ENCODE measurements at regions of chr11 and their contacts with region 1.

Region 1: GRCh38 chr11:76670485-76671236 is at the start of gene LRRC32:
- DNase-seq: peak in 1 of 2 donors; percentile 79
- H3K4me3 ChIP-seq: peak within 1 kb of the TSS; percentile 86 to 95
- H3K27ac ChIP-seq: peak within 1 kb of the TSS; percentile 83 to 91
- H3K4me1 ChIP-seq: peaks cover 18 to 33% of the 10 kb centered on the region in 2 donors
- H3K27me3 ChIP-seq: no peaks in the 10 kb centered on the region
- CTCF ChIP-seq: peak in 1 of 3 experiments; percentile 15
- total RNA-seq, gene LRRC32: 280 TPM

Region 2: DNA sequence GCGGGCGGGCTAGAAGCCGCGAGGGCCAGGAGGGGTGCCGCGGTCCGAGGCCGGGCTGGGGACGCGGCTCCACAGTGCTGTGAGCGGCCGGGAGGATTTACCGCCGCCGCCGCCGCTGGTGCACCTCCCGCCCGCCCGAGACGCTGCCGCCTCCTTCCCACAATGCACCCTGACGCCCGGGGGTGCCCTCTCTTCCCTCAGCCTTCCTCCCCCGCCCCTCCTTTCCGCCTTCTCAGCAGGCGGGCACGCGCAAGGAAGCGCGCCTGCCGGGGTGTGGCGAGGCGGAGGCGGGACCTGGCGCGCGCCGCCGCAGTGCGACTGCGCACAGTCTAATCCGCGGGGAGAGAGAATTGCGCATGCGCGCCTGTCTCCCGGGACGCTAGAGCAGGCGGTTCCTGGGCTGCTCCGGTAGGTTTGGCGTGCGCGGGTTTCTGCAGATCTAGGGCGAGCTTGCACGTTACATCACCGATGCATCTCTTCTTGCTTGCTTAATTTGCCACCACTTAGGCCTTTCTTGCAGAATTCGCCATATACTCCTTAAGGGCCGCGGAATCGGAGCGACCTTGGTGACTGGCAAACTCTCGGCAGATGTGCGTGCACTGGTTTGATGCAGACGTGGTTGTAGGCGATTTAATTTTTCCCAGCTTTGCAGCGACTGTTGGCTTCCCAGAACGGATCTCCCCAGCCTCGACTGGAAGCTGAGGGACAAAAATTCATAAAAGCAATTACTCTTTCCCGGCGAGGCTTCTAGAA is 289.5 kb before region 1 on chr11 and contains the starts of genes GVQW3 and THAP12:
- intact Hi-C with region 1: loop called (anchors 5 kb)
- DNase-seq: peak; percentile 88 to 99
- H3K4me3 ChIP-seq: peak within 1 kb of the TSS; percentile 89 to 98
- H3K27ac ChIP-seq: peak within 1 kb of the TSS; percentile 73 to 84
- H3K4me1 ChIP-seq: peaks cover 0 to 21% of the 10 kb centered on the region in 2 donors
- H3K27me3 ChIP-seq: no peaks in the 10 kb centered on the region
- CTCF ChIP-seq: peak in 2 of 3 experiments; percentile 19 to 26
- total RNA-seq, gene GVQW3: not detected
- total RNA-seq, gene THAP12: 12.7 TPM

Region 3: GRCh38 chr11:76444384-76445123 is 226.1 kb before region 1 on chr11 and contains the start of gene EMSY:
- intact Hi-C with region 1: loop called (anchors 5 kb)
- DNase-seq: peak; percentile 89 to 99
- H3K4me3 ChIP-seq: peak within 1 kb of the TSS; percentile 87 to 90
- H3K27ac ChIP-seq: peak within 1 kb of the TSS; percentile 90 to 93
- H3K4me1 ChIP-seq: peaks cover 8 to 15% of the 10 kb centered on the region in 2 donors
- H3K27me3 ChIP-seq: no peaks in the 10 kb centered on the region
- CTCF ChIP-seq: no peak
- total RNA-seq, gene EMSY: 7.5 TPM

Region 4: DNA sequence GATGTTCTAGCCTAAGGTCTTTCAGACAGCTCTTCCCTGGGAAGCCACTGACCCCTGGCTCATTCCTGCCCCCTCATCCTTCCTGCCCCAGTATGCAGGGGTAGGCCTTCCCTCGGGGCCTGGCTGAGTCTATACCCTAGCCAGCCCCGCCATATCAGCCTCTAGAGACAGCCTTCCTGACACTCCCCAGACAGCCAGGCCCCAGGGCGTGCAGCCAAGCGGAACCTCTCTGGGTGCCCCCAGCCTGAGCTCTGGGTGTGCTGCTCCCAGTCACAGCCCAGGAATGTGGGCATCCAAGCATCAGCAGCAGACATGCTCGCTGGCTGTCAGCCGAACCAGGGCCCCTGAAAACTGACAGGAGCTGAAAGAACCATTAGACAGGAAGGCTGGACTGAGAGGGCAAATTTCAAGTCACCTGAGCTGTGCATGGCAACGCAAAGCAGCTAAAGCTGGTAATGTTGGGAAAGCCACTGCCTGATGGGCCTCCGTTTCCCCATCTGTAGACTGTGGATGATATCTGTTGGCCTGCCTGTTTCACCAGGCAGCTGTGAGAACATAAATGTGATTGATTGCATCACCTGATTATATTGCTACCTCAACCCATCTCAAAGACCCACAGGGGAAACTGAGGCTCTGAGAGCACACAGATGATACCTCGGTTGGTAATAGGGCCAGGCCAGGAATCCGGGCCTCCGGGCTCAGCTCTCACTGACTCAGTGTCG is 93.3 kb before region 1 on chr11:
- intact Hi-C with region 1: loop called (anchors 1 kb)
- DNase-seq: peak in 1 of 2 donors; percentile 79
- H3K4me3 ChIP-seq: no peak overlapping the region
- H3K27ac ChIP-seq: peak overlapping the region; percentile 82 to 85
- H3K4me1 ChIP-seq: peaks cover 11 to 31% of the 10 kb centered on the region in 2 donors
- H3K27me3 ChIP-seq: no peaks in the 10 kb centered on the region
- CTCF ChIP-seq: no peak

Region 5: GRCh38 chr11:76610871-76611475 is 59.7 kb before region 1 on chr11:
- intact Hi-C with region 1: loop called (anchors 5 kb)
- DNase-seq: no peak
- H3K4me3 ChIP-seq: no peak overlapping the region
- H3K27ac ChIP-seq: peak overlapping the region; percentile 58 to 63
- H3K4me1 ChIP-seq: peaks cover 20 to 52% of the 10 kb centered on the region in 2 donors
- H3K27me3 ChIP-seq: no peaks in the 10 kb centered on the region
- CTCF ChIP-seq: peak in 1 of 3 experiments; percentile 38

Region 6: GRCh38 chr11:76654298-76654851 is 16.3 kb before region 1 on chr11:
- intact Hi-C with region 1: loop called (anchors 1 kb)
- DNase-seq: peak in 1 of 2 donors; percentile 92
- H3K4me3 ChIP-seq: peak overlapping the region in 1 of 2 donors; percentile 24
- H3K27ac ChIP-seq: peak overlapping the region; percentile 86 to 91
- H3K4me1 ChIP-seq: peaks cover 26 to 60% of the 10 kb centered on the region in 2 donors
- H3K27me3 ChIP-seq: no peaks in the 10 kb centered on the region
- CTCF ChIP-seq: no peak

Region 7: GRCh38 chr11:76799066-76799804 is 128.6 kb after region 1 on chr11:
- intact Hi-C with region 1: no loop called
- DNase-seq: peak in 1 of 2 donors; percentile 93
- H3K4me3 ChIP-seq: peak overlapping the region; percentile 37 to 46
- H3K27ac ChIP-seq: peak overlapping the region; percentile 36 to 79
- H3K4me1 ChIP-seq: peaks cover 0 to 7% of the 10 kb centered on the region in 2 donors
- H3K27me3 ChIP-seq: no peaks in the 10 kb centered on the region
- CTCF ChIP-seq: peak; percentile 95 to 96 (median 96)

Region 8: DNA sequence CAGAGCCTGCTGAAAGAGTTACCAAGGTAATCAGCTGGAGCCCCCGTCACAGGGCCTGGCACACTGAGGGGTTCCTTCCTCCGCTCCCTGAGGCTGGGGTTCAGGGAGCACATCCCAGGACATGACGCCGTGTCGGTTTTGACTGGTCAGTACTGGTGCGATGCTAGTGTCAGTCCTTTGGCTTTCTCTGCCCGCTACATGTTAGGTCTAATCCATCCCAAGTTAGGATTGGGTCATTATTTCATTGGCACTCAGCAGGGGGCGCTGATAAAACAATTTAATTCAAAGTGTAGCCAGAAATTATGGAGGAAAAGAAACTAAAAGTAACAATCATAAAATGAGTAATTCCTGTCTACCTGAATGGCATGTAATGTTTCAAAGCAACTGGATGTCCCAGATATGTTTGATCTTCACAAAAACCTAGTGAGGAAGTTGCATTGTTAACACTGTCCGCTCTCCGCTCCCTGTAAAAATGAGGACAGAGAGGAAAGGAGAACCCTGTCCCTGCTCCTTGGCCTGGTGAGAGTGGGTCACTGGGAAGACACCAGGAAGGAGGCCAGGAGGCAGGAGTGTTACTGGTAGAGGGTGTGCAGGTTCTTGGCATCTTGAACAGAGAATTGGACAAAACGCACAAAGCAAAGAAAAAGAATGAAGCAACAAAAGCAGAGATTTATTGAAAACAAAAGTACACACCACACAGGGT is 139.6 kb after region 1 on chr11:
- intact Hi-C with region 1: no loop called
- DNase-seq: peak in 1 of 2 donors; percentile 61
- H3K4me3 ChIP-seq: no peak overlapping the region
- H3K27ac ChIP-seq: no peak overlapping the region
- H3K4me1 ChIP-seq: peaks cover 0 to 8% of the 10 kb centered on the region in 2 donors
- H3K27me3 ChIP-seq: no peaks in the 10 kb centered on the region
- CTCF ChIP-seq: peak; percentile 29 to 36 (median 35)

Region 9: GRCh38 chr11:77332259-77332658 is 661.6 kb after region 1 on chr11:
- intact Hi-C with region 1: no loop called
- DNase-seq: no peak
- H3K4me3 ChIP-seq: no peak overlapping the region
- H3K27ac ChIP-seq: no peak overlapping the region
- H3K4me1 ChIP-seq: no peaks in the 10 kb centered on the region
- H3K27me3 ChIP-seq: no peaks in the 10 kb centered on the region
- CTCF ChIP-seq: no peak